ENCODE measurements at regions of chr12 and their contacts with region 1.

Region 1: GRCh38 chr12:67804168-67804567 is 155.6 kb downstream of the DYRK2 start:
- DNase-seq: no peak
- ATAC-seq: no peak
- H3K4me3 ChIP-seq: no peak overlapping the region
- H3K27ac ChIP-seq: no peak overlapping the region
- H3K4me1 ChIP-seq: no peaks in the 10 kb centered on the region
- H3K27me3 ChIP-seq: no peaks in the 10 kb centered on the region
- CTCF ChIP-seq: no peak
- EP300 ChIP-seq: no peak
- POLR2A ChIP-seq: no peak
- RAD21 ChIP-seq: no peak

Region 2: DNA sequence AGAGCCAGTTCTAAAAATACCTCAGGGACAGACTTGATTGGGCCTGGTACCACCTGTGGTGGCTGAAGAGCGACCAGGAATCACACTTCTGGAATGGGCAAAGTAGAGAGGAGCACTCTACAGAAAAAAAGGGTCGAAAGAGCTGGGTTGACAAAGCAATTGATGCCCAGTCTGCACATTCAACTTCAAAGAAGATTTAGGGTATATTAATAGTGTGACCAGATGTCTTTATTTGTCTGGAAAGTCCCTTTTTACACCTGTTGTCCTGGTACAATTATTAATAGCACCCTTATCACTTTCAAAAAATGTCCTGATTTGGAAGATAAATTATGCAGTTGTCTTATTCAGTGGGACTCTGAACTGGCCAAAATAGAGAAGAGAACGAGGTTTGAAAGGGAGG is 18.1 kb before region 1 on chr12:
- CTCF ChIA-PET with region 1: no interaction called
- POLR2A ChIA-PET with region 1: no interaction called
- in situ Hi-C with region 1: no loop called
- intact Hi-C with region 1: loop called (anchors 1 kb)
- DNase-seq: no peak
- ATAC-seq: no peak
- H3K4me3 ChIP-seq: no peak overlapping the region
- H3K27ac ChIP-seq: no peak overlapping the region
- H3K4me1 ChIP-seq: no peaks in the 10 kb centered on the region
- H3K27me3 ChIP-seq: no peaks in the 10 kb centered on the region
- CTCF ChIP-seq: no peak
- EP300 ChIP-seq: no peak
- POLR2A ChIP-seq: no peak
- RAD21 ChIP-seq: no peak

Region 3: DNA sequence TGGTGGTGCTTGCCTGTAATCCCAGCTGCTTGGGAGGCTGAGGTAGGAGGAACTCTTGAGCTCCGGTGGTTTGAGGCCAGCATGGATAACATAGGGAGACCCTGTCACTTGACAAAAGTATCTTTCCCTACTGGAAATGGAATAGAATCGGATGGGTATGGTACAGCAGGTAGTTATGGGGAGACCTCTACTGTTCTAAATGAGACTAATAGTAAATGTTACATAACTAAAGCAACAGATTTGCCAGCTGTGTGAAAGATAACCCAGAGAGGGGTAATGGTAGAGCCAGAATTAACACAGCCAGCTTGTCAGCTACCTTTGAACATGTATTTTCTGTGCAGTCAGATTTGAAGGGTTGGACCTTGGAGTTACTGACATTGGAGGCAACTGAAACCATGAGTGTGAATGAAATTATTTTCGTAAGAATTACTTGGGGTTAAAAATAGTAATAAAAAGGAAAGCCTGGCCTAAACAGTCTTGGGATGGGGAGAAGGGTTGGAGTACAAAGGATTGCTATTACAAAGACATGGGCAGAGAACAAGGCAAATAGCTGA is 860.9 kb after region 1 on chr12:
- CTCF ChIA-PET with region 1: no interaction called
- POLR2A ChIA-PET with region 1: no interaction called
- in situ Hi-C with region 1: no loop called
- intact Hi-C with region 1: no loop called
- DNase-seq: peak in 2 of 4 experiments; percentile 11 to 13
- ATAC-seq: peak; percentile 68
- H3K4me3 ChIP-seq: no peak overlapping the region
- H3K27ac ChIP-seq: no peak overlapping the region
- H3K4me1 ChIP-seq: no peaks in the 10 kb centered on the region; a peak in 1 of 5 replicates
- H3K27me3 ChIP-seq: no peaks in the 10 kb centered on the region
- CTCF ChIP-seq: peak in 2 of 3 experiments; percentile 17 to 42; a peak in 3 of 6 replicates
- EP300 ChIP-seq: no peak
- POLR2A ChIP-seq: peak; percentile 7
- RAD21 ChIP-seq: peak; percentile 20 to 58; a peak in 3 of 4 replicates